A673 (cell line): ENCODE measurements at regions of chr2 and their contacts with region 1.

Region 1: GRCh38 chr2:219459460-219460311 is 25.0 kb downstream of the SPEG start:
- DNase-seq: peak; percentile 38
- H3K4me3 ChIP-seq: no peak overlapping the region
- H3K27ac ChIP-seq: no peak overlapping the region
- H3K4me1 ChIP-seq: peaks cover 6% of the 10 kb centered on the region
- H3K27me3 ChIP-seq: no peaks in the 10 kb centered on the region
- CTCF ChIP-seq: peak; percentile 90

Region 2: GRCh38 chr2:219765231-219765911 is 305.7 kb after region 1 on chr2:
- CTCF ChIA-PET with region 1: no interaction called
- POLR2A ChIA-PET with region 1: no interaction called
- intact Hi-C with region 1: no loop called
- DNase-seq: no peak
- H3K4me3 ChIP-seq: no peak overlapping the region
- H3K27ac ChIP-seq: no peak overlapping the region
- H3K4me1 ChIP-seq: no peaks in the 10 kb centered on the region
- H3K27me3 ChIP-seq: no peaks in the 10 kb centered on the region
- CTCF ChIP-seq: no peak

Region 3: GRCh38 chr2:219844401-219845091 is 384.9 kb after region 1 on chr2:
- CTCF ChIA-PET with region 1: interaction called, 11 read pairs
- POLR2A ChIA-PET with region 1: no interaction called
- intact Hi-C with region 1: no loop called
- DNase-seq: no peak
- H3K4me3 ChIP-seq: no peak overlapping the region
- H3K27ac ChIP-seq: no peak overlapping the region
- H3K4me1 ChIP-seq: peaks cover 7% of the 10 kb centered on the region
- H3K27me3 ChIP-seq: no peaks in the 10 kb centered on the region
- CTCF ChIP-seq: no peak